ENCODE measurements at regions of chr1 and their contacts with region 1.

Region 1: DNA sequence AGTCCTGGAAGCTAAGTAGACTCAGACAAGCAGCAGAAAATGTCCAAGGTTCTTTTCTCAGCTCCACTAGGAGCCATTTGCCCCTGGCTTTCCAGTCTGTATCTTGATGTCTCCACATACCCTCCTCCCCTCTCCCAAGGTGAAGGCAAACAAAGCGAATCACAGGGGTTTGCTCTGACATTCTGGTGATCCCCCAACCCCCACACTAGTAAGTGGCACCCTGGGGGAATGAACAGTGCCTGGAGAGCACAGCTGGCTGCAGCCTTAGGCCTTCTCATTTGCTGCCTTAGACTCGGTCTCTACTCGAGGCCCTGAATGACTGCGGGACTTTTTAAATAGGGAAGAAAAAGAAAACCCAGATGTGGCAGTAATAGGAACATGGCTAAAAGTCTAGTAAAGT is 15.3 kb downstream of the ERI3 start:
- DNase-seq: no peak
- CTCF ChIP-seq: no peak

Region 2: DNA sequence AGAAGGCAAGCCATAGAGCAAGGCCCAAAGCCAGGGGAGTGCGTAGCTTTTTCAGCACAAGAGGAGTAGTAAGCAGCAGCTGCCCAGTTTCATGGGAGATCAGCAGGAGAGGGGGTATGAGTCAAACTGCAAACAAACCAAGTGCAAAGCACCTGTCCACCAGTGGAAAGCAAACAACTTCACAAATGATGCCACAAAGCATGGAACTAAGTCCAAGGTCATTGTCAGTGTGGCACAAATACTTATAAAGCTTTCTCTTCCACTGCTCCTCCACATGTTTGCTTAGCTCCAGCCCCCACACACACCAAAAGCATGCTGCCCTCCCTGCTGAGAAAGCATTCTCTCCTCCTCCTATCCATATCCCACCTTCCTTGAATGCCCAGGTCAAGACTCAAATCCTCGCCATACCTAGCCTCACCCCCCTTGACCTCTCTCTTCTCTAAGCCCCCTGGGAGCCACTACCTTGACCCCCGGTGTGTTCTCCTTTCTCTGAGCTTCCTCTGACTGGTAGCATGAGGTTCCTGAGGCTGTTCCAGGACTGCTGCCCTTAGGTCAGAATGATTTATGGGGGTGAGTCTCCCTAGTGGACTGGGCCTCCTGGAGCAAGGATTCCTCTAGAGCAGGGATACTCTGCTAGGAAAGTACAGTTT is 56.1 kb before region 1 on chr1:
- CTCF ChIA-PET with region 1: no interaction called
- POLR2A ChIA-PET with region 1: no interaction called
- DNase-seq: no peak
- CTCF ChIP-seq: no peak

Region 3: GRCh38 chr1:44354268-44354839 is 14.6 kb after region 1 on chr1:
- CTCF ChIA-PET with region 1: interaction called, 15 read pairs
- POLR2A ChIA-PET with region 1: interaction called, 3 read pairs
- DNase-seq: no peak
- CTCF ChIP-seq: no peak

Region 4: DNA sequence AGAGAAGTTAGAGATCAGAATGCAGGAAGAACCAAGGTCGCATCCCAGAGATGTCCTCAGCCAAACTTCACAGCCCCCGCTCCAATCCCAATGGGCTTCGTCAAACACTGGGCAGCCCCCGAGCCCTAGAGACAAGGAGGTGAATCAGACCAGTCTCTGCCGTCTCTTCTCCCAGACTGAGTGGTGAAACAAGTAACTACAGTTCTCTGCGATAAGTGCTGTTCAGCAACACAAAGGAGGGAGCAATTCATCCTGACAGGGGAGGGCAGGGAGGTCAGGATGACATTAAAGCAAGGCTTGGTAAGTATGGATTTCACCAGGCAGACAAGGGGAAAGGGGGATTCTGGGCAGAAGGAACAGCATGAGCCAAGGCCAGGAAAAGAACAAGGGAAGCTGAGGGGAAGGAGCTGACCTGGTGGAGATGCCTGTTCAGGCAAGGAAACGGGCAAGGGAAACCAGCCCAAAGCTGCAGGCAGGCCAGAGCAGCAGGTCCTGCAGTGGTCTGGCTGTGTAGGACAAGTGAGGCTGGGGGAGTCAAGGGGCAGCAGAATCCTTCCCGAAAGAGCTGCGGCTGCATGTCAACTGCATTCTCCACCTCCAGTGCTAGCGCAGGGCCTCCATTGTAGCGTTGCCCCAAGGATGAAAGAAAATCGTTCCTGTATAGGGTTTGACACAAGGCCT is 28.9 kb after region 1 on chr1:
- CTCF ChIA-PET with region 1: no interaction called
- POLR2A ChIA-PET with region 1: no interaction called
- DNase-seq: no peak
- CTCF ChIP-seq: no peak

Region 5: DNA sequence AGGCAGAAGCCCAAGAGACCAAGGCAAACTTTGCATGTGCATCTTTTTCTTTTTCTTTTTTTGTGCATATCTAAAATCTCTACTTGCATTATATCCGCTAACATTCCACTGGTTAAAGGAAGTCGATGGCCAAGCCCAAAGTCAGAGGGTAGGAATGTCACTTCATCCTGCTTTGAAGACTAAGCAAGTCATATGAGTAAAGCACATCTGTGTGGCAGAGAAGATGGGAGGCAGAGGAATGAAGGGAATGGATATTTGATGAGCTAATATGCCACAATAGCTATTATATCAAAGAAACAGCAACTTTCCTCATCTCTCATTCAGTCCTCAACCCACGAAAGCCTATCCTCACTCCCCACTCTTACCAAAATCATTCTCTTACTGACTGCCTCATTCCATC is 124.6 kb after region 1 on chr1:
- CTCF ChIA-PET with region 1: no interaction called
- POLR2A ChIA-PET with region 1: no interaction called
- DNase-seq: no peak
- CTCF ChIP-seq: no peak

Region 6: GRCh38 chr1:44511769-44512168 is 172.0 kb after region 1 on chr1:
- CTCF ChIA-PET with region 1: no interaction called
- POLR2A ChIA-PET with region 1: no interaction called
- DNase-seq: no peak
- CTCF ChIP-seq: no peak

Measured in GM10248 (cell line).